ENCODE measurements at regions of chr10 and their contacts with region 1.

Region 1: DNA sequence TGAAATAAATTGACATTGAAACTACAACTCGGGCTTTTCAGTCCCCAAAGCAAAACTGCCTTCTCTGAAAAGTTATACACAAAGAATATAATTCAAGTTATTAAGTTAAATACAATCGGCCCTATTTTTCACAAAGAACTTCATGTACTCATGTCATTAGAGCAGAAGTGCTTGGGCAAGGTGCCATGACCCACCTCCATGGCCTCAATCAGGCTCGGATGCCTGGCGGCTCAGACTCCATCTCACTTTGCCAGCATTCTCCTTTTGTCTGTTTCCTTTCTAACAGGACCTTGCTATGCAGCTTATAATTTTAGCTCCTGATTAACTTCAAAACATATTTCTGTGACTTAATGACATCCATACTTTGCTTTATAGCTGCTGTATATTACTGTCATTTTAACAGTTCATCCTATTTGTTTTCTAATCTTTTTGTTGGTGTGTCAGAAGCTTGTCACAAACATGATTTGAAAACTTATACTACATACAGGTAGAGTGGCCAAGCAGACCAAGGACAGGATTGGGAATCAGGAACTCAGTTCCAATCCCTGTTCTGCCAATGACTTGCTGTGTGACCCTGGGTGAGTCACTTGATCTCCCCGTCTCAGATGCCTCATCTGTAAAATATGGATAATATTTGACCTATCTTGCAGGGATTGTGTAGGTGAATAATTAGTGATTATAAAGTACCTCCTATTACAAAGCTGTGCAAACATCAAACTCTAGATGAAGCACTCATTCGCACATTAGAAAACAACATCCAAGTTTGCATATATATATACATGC is 60.8 kb upstream of the ITGA8 start:
- DNase-seq: no peak
- H3K4me3 Mint-ChIP-seq: no peak overlapping the region
- H3K27ac Mint-ChIP-seq: no peak overlapping the region
- H3K4me1 Mint-ChIP-seq: peaks cover 7% of the 10 kb centered on the region
- H3K27me3 Mint-ChIP-seq: no peaks in the 10 kb centered on the region

Region 2: DNA sequence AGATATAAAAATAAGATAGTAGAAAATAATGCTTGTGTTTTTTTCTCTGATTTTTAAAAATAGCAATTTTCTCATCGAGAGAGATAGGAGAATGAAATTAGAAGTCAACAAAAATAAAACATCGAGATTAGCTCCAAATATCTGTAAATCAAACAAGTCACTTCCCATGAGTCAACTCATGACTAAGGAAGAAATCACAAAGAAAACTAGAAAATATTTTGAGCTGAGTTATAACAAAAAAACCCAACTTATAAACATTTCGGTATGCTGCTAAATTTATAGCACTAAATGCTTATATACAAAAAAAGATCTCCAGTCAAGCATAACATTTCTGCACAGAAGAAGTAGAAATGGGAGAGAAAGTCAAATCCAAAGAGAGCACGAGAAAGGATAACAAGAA is 200.9 kb before region 1 on chr10:
- intact Hi-C with region 1: no loop called
- DNase-seq: no peak
- H3K4me3 Mint-ChIP-seq: no peak overlapping the region
- H3K27ac Mint-ChIP-seq: no peak overlapping the region
- H3K4me1 Mint-ChIP-seq: no peaks in the 10 kb centered on the region
- H3K27me3 Mint-ChIP-seq: peaks cover 7% of the 10 kb centered on the region

Region 3: GRCh38 chr10:15744217-15744865 is 36.2 kb before region 1 on chr10:
- intact Hi-C with region 1: loop called (anchors 1 kb)
- DNase-seq: peak; percentile 14
- H3K4me3 Mint-ChIP-seq: no peak overlapping the region
- H3K27ac Mint-ChIP-seq: no peak overlapping the region
- H3K4me1 Mint-ChIP-seq: no peaks in the 10 kb centered on the region
- H3K27me3 Mint-ChIP-seq: peaks cover 10% of the 10 kb centered on the region